IMR-90 (cell line): ENCODE measurements at regions of chr10 and their contacts with region 1.

Region 1: DNA sequence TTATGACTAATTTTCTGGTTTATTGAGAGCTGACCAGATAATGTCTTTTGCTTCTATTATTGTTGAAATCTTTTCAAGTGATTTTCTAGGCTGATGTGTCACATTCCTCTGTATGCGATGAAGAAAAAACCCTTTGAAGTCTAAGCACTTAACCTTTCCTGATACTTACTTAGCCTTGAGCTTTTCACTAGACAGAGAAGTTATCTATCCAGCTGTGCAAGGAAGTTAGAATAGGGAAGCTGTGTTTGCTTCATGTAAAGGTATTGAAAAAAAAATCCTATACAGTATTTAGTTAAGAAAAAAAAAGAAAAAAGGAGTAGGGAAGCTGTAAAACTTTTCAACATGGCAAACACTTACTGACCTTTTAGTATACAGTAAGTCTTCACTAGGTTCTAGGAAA is 117.6 kb upstream of the DNAJB12 start:
- DNase-seq: no peak
- ATAC-seq: no peak
- H3K4me3 ChIP-seq: no peak overlapping the region
- H3K27ac ChIP-seq: no peak overlapping the region
- H3K4me1 ChIP-seq: no peaks in the 10 kb centered on the region
- H3K27me3 ChIP-seq: no peaks in the 10 kb centered on the region
- CTCF ChIP-seq: no peak
- POLR2A ChIP-seq: no peak
- RAD21 ChIP-seq: no peak

Region 2: GRCh38 chr10:71834343-71834674 is 638.0 kb before region 1 on chr10:
- CTCF ChIA-PET with region 1: no interaction called
- POLR2A ChIA-PET with region 1: interaction called, 13 read pairs
- dilution Hi-C with region 1: no loop called
- in situ Hi-C with region 1: no loop called
- intact Hi-C with region 1: no loop called
- DNase-seq: no peak
- ATAC-seq: no peak
- H3K4me3 ChIP-seq: no peak overlapping the region
- H3K27ac ChIP-seq: no peak overlapping the region
- H3K4me1 ChIP-seq: peaks cover 24% of the 10 kb centered on the region
- H3K27me3 ChIP-seq: no peaks in the 10 kb centered on the region
- CTCF ChIP-seq: no peak
- POLR2A ChIP-seq: no peak
- RAD21 ChIP-seq: no peak